Activated naive CD4-positive, alpha-beta T cell treated with anti-CD3 and anti-CD28 coated beads, Interleukin-2, amount 10 ng/mL, durations not matched to agents 7 days and 5 days (primary cell): ENCODE measurements at regions of chr5 and their contacts with region 1.

Region 1: DNA sequence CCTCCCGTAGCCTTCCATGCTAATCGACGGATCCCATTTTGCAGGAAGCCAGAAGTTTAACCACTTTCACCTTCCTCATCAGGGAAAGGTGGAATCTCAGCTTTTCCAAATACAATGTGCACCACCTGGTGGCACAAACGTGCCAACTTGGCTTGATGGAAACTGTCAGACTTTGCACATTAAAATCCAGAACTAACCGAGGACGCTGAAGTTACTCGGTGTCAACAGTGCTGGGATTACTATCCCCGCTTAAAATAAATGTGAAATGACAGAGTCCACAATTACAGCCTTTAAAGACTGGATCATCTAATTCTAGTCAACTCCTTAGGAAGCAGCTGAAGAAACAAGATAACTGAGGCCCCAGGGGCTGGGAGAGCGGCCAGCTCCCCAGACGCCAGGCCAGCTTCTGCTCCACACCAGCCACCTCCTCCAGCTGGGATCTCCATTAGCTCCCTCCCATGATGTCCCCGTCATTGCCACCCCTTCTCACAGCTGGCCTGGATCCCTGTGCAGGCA is 50.1 kb upstream of the RETREG1 start:
- DNase-seq: peak; percentile 55
- H3K4me3 Mint-ChIP-seq: no peak overlapping the region
- H3K27ac Mint-ChIP-seq: no peak overlapping the region
- H3K4me1 Mint-ChIP-seq: peaks cover 2% of the 10 kb centered on the region
- H3K27me3 Mint-ChIP-seq: peaks cover 20% of the 10 kb centered on the region

Region 2: DNA sequence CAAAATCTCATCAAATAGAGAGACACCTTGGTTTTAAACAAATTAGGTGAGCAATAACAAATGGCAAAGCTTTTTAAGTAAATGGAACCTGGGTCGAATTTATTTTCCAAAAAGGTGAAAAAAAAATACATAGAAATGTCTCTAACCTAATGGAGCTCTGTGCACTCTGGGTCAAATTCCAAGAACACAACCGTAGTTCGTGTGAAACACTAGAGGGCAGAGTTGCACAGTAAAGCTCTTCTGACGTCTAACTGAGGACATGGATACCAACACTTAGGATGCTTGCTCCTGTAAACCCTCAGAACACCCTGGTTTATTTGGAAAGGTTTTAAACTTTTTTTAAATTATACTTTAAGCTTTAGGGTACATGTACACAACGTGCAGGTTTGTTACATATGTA is 506.2 kb before region 1 on chr5:
- CTCF ChIA-PET with region 1: interaction called, 19 read pairs
- DNase-seq: no peak
- H3K4me3 Mint-ChIP-seq: no peak overlapping the region
- H3K27ac Mint-ChIP-seq: no peak overlapping the region
- H3K4me1 Mint-ChIP-seq: no peaks in the 10 kb centered on the region
- H3K27me3 Mint-ChIP-seq: no peaks in the 10 kb centered on the region

Region 3: DNA sequence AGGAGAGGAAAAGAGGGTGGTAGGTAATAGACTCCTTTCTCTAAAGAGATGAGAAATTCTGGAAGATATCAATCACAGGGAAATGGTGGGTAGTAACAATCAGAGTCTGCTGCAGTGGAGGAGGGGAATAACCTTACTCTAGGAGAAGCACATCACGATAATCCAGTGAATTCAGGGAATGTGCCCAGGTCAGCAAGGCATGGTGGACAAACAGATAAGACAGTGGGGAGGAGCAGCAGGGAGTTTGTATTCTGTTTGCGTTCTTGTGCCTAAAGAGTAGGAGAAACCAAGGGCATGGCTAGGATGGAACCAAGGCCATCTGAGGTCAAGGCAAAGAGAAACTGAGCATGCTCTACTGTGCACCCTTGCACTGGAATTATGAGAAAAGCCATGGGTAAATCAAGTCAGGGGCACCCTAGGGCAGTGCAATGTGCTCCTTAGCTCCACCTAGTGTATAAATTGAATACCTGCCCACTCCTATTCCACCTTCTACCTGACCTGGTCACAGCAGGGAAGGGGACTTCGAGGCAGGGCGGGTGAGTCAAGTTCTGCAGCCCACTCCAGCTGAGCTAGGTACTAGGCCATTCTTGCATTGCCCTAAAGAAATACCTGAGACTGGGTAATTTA is 81.8 kb before region 1 on chr5:
- CTCF ChIA-PET with region 1: interaction called, 11 read pairs
- DNase-seq: no peak
- H3K4me3 Mint-ChIP-seq: no peak overlapping the region
- H3K27ac Mint-ChIP-seq: no peak overlapping the region
- H3K4me1 Mint-ChIP-seq: peaks cover 3% of the 10 kb centered on the region
- H3K27me3 Mint-ChIP-seq: no peaks in the 10 kb centered on the region

Region 4: DNA sequence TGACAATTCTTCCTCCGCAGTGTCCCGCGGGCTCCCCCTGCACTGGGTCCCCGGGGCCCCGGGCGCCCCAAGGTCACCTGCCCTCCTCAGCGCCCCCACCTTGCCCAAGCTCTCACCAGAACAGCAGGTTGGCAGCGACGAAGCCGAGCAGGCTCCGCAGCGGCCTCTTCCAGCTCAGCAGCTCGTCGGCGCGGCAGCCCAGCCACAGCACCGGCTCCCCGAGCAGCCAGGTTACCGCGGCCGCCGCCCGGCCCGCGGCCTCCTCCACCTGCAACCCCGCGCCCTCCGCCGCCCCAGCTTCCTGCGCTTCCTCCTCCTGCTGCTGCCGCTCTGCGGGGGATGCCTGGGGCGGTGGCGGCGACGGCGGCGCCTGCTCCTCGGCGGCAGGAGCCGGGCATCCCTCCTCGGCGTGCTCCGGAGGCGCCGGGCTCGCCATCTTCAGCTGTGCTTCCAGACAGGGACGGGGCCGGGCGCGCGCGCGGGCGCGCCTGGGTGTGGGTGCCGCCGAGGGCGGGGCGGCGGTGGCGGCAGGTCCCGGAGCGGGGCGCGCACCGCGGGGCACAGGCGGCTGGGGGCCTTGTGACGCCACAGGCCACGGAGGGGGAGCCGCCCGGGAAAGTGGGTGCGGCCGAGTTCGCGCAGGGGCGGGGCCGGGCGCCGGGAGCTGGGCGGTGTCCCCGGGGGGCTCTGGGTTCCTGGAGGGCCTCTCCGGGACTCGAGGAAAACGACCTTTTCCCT is 50.2 kb before region 1 on chr5 and contains the start of gene RETREG1:
- CTCF ChIA-PET with region 1: interaction called, 11 read pairs
- DNase-seq: peak; percentile 87
- H3K4me3 Mint-ChIP-seq: peak within 1 kb of the TSS; percentile 99
- H3K27ac Mint-ChIP-seq: peak within 1 kb of the TSS; percentile 97
- H3K4me1 Mint-ChIP-seq: peaks cover 44% of the 10 kb centered on the region
- H3K27me3 Mint-ChIP-seq: peaks cover 3% of the 10 kb centered on the region

Region 5: GRCh38 chr5:16626663-16627264 is 40.2 kb before region 1 on chr5:
- CTCF ChIA-PET with region 1: interaction called, 14 read pairs
- DNase-seq: peak; percentile 55
- H3K4me3 Mint-ChIP-seq: no peak overlapping the region
- H3K27ac Mint-ChIP-seq: peak overlapping the region; percentile 92
- H3K4me1 Mint-ChIP-seq: peaks cover 63% of the 10 kb centered on the region
- H3K27me3 Mint-ChIP-seq: no peaks in the 10 kb centered on the region

Region 6: DNA sequence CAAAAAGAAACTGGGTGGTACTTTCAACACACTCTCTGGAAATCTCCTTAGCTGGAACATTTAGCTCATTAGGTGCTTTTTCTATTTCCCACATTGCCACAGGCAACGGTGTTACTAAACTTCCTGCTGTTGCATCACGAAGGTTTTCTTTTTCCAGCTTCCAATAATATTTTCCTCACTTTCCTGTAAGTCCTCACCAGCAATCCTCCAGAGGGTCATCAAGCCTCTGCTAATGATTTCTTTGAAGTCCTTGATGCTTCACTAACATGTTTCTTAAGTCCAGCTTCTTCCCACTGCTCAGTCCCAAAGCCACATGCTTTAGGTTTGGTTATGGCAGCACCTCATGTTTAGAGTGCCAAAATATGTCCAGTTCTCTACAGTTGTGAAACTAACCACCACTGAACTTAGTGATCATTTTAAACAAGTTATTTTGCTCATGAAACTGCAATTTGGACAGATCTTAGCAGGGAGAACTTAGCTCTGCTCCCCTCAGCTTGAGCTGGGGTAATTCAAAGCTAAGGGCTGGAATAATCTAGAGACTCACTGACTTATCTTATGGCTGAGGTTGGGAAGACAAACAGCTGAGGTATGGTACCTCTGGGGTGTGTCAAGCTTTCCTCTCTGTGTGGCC is 10.3 kb before region 1 on chr5:
- CTCF ChIA-PET with region 1: interaction called, 14 read pairs
- DNase-seq: no peak
- H3K4me3 Mint-ChIP-seq: no peak overlapping the region
- H3K27ac Mint-ChIP-seq: no peak overlapping the region
- H3K4me1 Mint-ChIP-seq: no peaks in the 10 kb centered on the region
- H3K27me3 Mint-ChIP-seq: peaks cover 6% of the 10 kb centered on the region